Astrocyte of the cerebellum (primary cell): ENCODE measurements at regions of chr16 and their contacts with region 1.

Region 1: DNA sequence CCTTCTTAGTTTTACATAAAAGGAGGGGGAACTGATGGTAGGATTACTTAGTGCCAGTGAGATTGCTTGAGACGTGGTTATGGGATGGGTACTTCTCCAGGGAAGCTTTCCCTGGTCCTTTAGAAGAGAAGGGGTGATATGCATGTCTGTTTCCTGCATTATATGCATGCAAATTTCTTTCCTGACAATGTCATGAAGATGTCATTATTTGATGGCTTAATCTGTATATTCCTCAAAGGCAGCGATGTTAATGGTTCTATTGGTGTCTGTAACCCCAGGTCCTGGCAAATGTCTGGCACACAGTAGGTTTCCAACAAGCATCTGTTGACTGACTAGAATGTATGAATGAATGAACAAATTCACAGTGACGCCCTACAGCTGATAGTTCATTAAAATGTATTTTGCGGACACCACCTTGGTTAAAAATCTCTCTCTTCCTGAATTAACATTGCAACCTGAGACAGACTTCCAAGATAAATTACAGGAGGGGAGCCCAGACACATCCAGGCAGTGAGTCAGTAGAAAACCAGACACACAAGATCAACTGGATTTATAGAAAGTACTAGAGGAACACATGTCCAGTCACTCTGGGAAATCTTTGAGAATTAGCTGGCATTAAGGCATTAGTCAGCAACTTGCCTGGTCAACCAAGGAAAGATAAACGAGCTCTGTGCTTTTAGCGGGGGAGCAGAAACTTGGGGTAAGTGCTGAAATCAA is 293.4 kb downstream of the XYLT1 start:
- DNase-seq: no peak
- H3K4me3 ChIP-seq: no peak overlapping the region
- CTCF ChIP-seq: no peak

Region 2: GRCh38 chr16:17120667-17121066 is 56.7 kb before region 1 on chr16:
- in situ Hi-C with region 1: loop called (anchors 5 kb)
- DNase-seq: no peak
- H3K4me3 ChIP-seq: no peak overlapping the region
- CTCF ChIP-seq: no peak

Region 3: GRCh38 chr16:17271687-17272086 is 94.3 kb after region 1 on chr16:
- in situ Hi-C with region 1: no loop called
- DNase-seq: no peak
- H3K4me3 ChIP-seq: no peak overlapping the region
- CTCF ChIP-seq: no peak

Region 4: GRCh38 chr16:17404941-17405689 is 227.7 kb after region 1 on chr16:
- in situ Hi-C with region 1: no loop called
- DNase-seq: peak; percentile 62
- H3K4me3 ChIP-seq: no peak overlapping the region
- CTCF ChIP-seq: no peak